Lower leg skin (tissue), 4 donors: ENCODE measurements at regions of chr7 and their contacts with region 1.

Region 1: DNA sequence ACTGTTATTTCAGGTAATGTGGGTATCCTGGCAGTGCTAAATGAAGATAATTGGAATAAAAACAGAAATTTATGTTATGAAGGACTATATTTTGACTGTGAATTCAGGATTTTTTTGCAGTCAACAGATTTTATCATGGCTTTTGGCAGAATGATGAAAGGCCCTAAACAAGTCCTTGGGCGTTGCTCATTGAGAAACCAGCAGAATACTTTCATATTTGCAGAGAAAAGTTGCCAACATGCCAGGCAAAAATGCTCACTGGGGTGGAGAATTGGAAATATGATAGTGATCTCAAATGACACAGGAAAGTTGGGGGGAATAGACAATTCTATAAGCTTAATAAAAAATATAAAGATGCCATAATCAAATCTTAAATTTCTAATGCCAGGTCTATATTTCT is 121.1 kb downstream of the GPR85 start:
- DNase-seq: no peak
- H3K4me3 ChIP-seq: no peak overlapping the region
- CTCF ChIP-seq: no peak
- POLR2A ChIP-seq: no peak

Region 2: GRCh38 chr7:112990619-112991018 is 25.1 kb after region 1 on chr7:
- intact Hi-C with region 1: loop called (anchors 2 kb)
- DNase-seq: no peak
- H3K4me3 ChIP-seq: no peak overlapping the region
- CTCF ChIP-seq: no peak
- POLR2A ChIP-seq: no peak